BJ (cell line): ENCODE measurements at regions of chr1 and their contacts with region 1.

Region 1: DNA sequence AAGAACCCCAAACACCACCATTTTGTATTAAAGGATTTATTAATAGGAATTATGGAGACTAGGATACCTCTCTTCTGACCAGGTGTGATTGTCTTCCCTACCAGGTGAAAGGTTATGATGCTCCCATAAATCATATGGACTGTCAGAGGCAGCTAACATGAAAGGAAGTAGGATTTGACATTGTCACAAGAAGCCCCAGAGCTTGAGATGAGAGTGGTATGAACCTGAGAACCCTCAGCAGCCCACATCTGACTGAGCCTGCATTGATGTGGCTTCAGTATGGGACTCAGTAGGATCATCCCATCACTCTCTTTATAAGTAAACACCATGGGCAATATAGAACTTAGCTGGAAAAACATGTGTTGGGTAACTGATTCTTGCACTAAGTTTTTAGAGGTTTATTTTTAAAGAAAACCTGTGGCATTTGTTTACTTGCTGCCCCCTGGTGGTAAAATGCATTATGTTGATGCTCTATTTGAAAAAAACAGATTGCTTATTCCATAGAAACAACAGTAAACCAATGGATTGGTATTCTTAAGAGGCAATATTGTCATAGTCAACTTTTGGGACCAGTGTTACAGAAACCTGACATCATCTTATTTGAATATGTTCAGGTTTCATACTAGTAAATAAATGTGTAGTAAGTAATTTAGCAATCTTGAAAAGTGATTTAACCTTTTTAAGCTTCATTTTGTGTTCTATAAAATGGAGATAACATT is 16.6 kb upstream of the CACYBP start:
- DNase-seq: no peak
- H3K4me3 ChIP-seq: no peak overlapping the region
- H3K27me3 ChIP-seq: no peaks in the 10 kb centered on the region
- CTCF ChIP-seq: peak; percentile 58

Region 2: DNA sequence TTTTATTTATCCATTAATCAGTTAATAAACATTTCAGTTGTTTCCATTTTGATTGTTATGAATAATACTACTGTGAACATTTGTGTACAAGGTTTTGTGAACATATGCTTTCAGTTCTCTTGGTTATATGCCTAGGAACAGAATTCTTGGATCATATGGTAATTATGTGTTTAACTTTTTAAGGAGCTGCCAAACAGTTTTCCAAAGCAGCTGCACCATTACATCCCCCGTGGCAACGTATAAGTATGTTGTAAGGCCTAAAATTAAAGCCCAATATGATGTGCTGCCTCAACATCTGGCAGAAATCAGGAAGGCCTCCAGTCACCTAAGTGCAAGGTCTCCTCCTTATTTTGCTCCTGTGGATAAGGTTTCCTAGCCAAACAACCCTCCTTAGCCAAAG is 218.9 kb before region 1 on chr1:
- CTCF ChIA-PET with region 1: interaction called, 19 read pairs
- POLR2A ChIA-PET with region 1: interaction called, 3 read pairs
- DNase-seq: no peak
- H3K4me3 ChIP-seq: no peak overlapping the region
- H3K27me3 ChIP-seq: no peaks in the 10 kb centered on the region
- CTCF ChIP-seq: no peak

Region 3: GRCh38 chr1:174769961-174770549 is 213.1 kb before region 1 on chr1:
- CTCF ChIA-PET with region 1: interaction called, 19 read pairs
- POLR2A ChIA-PET with region 1: no interaction called
- DNase-seq: peak; percentile 18
- H3K4me3 ChIP-seq: no peak overlapping the region
- H3K27me3 ChIP-seq: no peaks in the 10 kb centered on the region
- CTCF ChIP-seq: peak; percentile 69

Region 4: DNA sequence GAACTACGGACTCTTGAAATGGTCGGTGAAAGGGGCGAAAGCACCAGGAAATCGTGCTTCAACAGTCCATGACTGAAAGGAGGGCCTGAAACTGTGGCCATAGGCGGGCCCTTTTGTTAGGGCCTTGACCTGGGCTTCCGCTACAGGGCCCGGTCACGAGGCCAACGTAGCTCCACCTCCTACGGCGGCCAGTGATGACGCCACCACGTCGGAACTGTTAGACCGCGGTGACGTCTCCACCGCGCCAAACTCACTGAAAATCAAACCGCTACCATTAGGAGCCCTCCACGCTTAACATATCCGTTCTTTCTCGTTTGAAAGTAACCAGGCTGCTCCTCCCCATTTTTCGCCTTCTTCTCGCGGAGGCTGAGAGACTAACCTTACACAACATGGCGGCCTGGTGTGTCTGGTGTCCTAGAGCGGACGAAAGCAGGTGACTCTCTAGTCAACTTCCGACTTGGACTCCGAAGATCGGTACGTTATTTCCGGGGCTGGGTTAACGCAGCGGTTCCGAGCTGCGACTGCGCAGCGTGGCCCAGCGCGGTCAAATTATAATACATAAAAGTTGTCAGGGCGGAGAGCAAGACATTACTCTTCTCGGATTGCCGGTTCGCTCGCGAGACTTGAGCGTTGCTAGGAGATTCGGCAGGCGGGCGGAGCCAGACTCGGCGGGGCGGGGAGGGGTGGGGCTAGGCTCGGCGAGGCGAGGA is 16.2 kb after region 1 on chr1:
- CTCF ChIA-PET with region 1: interaction called, 10 read pairs
- POLR2A ChIA-PET with region 1: no interaction called
- DNase-seq: peak; percentile 99
- H3K4me3 ChIP-seq: peak overlapping the region; percentile 94
- H3K27me3 ChIP-seq: no peaks in the 10 kb centered on the region
- CTCF ChIP-seq: no peak